HCT116 (cell line): ENCODE measurements at regions of chr2 and their contacts with region 1.

Region 1: DNA sequence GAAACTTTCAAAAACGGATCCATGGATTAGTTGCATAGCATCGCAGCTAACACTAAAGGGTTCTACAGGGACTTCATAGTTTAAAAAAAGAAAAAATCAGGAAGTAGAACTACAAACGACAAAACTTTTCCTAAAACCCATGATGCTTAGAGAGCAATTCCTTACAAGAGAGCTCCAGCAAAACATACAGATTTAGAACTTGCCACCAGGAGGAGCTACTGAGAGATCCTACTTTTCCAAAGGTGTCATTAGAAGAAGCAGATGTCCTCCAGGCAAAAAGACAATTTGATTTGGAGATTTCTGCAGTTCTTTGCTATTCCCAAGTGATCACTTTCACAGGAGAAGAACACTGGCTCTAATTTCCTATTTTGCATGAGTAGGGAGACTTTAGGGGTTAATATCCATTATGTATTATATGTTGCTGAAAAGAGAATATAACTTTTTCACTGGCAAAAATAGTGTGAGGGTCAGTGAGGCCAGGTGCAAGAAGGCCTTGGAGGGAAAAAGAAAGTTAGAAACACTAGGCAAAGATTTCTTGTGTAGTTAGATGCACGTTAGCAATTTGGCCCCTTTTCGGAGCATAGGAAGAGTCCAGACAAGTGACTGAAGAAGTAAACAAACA is 436.2 kb downstream of the SUCLG1 start:
- DNase-seq: peak; percentile 66
- ATAC-seq: peak; percentile 78
- H3K4me3 ChIP-seq: no peak overlapping the region
- H3K27ac ChIP-seq: no peak overlapping the region
- H3K4me1 ChIP-seq: no peaks in the 10 kb centered on the region
- H3K27me3 ChIP-seq: no peaks in the 10 kb centered on the region
- CTCF ChIP-seq: peak; percentile 56 to 81 (median 73); a peak in 4 of 6 replicates
- POLR2A ChIP-seq: no peak
- RAD21 ChIP-seq: peak; percentile 64

Region 2: GRCh38 chr2:84077492-84077891 is 54.6 kb after region 1 on chr2:
- CTCF ChIA-PET with region 1: interaction called, 7 read pairs
- POLR2A ChIA-PET with region 1: no interaction called
- RAD21 ChIA-PET with region 1: no interaction called
- intact Hi-C with region 1: loop called (anchors 2 kb)
- DNase-seq: peak; percentile 16
- ATAC-seq: peak; percentile 87
- H3K4me3 ChIP-seq: no peak overlapping the region
- H3K27ac ChIP-seq: no peak overlapping the region
- H3K4me1 ChIP-seq: no peaks in the 10 kb centered on the region
- H3K27me3 ChIP-seq: no peaks in the 10 kb centered on the region
- CTCF ChIP-seq: peak in 2 of 3 experiments; percentile 53 to 68; a peak in 3 of 6 replicates
- POLR2A ChIP-seq: no peak
- RAD21 ChIP-seq: peak; percentile 63

Region 3: DNA sequence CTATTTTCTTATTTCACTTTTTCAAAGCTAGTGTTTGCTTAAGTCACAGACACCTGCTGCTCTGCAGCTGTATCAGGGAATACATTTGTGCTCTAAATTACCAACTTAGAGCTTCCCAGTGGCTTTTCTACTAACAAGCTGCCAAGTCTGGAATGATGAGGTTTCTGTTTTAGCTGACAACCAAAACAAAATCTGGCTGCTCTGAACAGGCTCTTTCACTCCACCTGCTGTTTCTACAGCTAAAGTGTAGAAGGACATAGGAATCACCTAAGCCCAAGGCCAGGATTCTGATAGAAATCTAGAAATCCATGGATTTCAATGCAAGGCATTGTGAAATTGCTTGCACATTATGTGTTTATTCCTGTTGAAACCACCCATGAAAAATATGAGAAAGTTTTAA is 234.9 kb after region 1 on chr2:
- CTCF ChIA-PET with region 1: interaction called, 16 read pairs
- POLR2A ChIA-PET with region 1: no interaction called
- RAD21 ChIA-PET with region 1: interaction called, 3 read pairs
- intact Hi-C with region 1: loop called (anchors 2 kb)
- DNase-seq: no peak
- ATAC-seq: no peak
- H3K4me3 ChIP-seq: no peak overlapping the region
- H3K27ac ChIP-seq: no peak overlapping the region
- H3K4me1 ChIP-seq: no peaks in the 10 kb centered on the region
- H3K27me3 ChIP-seq: no peaks in the 10 kb centered on the region
- CTCF ChIP-seq: peak; percentile 18 to 39 (median 31); a peak in 4 of 6 replicates
- POLR2A ChIP-seq: no peak
- RAD21 ChIP-seq: peak; percentile 56

Region 4: GRCh38 chr2:84302513-84303412 is 279.8 kb after region 1 on chr2:
- CTCF ChIA-PET with region 1: interaction called, 20 read pairs
- POLR2A ChIA-PET with region 1: no interaction called
- RAD21 ChIA-PET with region 1: interaction called in 1 of 2 experiments, 5 read pairs
- intact Hi-C with region 1: loop called (anchors 1 kb)
- DNase-seq: peak; percentile 47
- ATAC-seq: peak; percentile 99
- H3K4me3 ChIP-seq: no peak overlapping the region
- H3K27ac ChIP-seq: no peak overlapping the region
- H3K4me1 ChIP-seq: peaks cover 0 to 2% of the 10 kb centered on the region in 2 experiments; a peak in 2 of 4 replicates
- H3K27me3 ChIP-seq: no peaks in the 10 kb centered on the region
- CTCF ChIP-seq: peak; percentile 58 to 91 (median 88); a peak in 5 of 6 replicates
- POLR2A ChIP-seq: no peak
- RAD21 ChIP-seq: peak; percentile 83

Region 5: DNA sequence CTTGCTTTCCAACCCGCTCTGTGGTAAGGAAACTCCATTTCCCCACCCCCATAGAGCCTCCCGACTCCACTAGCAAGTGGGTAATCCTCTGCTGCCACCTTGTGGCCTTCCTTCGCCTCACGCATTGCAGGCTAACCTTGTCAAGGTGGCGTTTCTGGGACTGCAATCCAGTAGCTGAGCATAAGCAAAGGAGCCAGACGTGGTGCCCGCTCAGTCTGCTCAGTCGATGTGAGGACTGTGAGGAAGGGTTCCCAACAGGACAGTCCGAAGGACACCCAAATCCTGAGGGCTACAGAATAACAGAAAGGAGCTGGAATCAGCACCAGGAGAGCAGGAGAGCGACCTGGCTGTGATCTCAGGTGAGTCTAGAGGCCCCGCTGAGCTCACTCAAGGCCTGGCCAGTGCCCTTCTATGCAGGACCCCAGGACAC is 292.0 kb after region 1 on chr2:
- CTCF ChIA-PET with region 1: interaction called, 10 read pairs
- POLR2A ChIA-PET with region 1: no interaction called
- RAD21 ChIA-PET with region 1: no interaction called
- intact Hi-C with region 1: no loop called
- DNase-seq: peak; percentile 75
- ATAC-seq: peak; percentile 99
- H3K4me3 ChIP-seq: no peak overlapping the region
- H3K27ac ChIP-seq: no peak overlapping the region
- H3K4me1 ChIP-seq: no peaks in the 10 kb centered on the region
- H3K27me3 ChIP-seq: no peaks in the 10 kb centered on the region
- CTCF ChIP-seq: peak; percentile 71 to 97 (median 97); a peak in 5 of 6 replicates
- POLR2A ChIP-seq: no peak
- RAD21 ChIP-seq: peak; percentile 96

Region 6: GRCh38 chr2:84424152-84424551 is 401.2 kb after region 1 on chr2:
- CTCF ChIA-PET with region 1: no interaction called
- POLR2A ChIA-PET with region 1: no interaction called
- RAD21 ChIA-PET with region 1: no interaction called
- intact Hi-C with region 1: loop called (anchors 5 kb)
- DNase-seq: no peak
- ATAC-seq: no peak
- H3K4me3 ChIP-seq: no peak overlapping the region
- H3K27ac ChIP-seq: no peak overlapping the region
- H3K4me1 ChIP-seq: no peaks in the 10 kb centered on the region
- H3K27me3 ChIP-seq: no peaks in the 10 kb centered on the region
- CTCF ChIP-seq: peak; percentile 4 to 64 (median 45); a peak in 3 of 6 replicates
- POLR2A ChIP-seq: no peak
- RAD21 ChIP-seq: peak; percentile 55